ENCODE measurements at regions of chr11 and their contacts with region 1.

Region 1: DNA sequence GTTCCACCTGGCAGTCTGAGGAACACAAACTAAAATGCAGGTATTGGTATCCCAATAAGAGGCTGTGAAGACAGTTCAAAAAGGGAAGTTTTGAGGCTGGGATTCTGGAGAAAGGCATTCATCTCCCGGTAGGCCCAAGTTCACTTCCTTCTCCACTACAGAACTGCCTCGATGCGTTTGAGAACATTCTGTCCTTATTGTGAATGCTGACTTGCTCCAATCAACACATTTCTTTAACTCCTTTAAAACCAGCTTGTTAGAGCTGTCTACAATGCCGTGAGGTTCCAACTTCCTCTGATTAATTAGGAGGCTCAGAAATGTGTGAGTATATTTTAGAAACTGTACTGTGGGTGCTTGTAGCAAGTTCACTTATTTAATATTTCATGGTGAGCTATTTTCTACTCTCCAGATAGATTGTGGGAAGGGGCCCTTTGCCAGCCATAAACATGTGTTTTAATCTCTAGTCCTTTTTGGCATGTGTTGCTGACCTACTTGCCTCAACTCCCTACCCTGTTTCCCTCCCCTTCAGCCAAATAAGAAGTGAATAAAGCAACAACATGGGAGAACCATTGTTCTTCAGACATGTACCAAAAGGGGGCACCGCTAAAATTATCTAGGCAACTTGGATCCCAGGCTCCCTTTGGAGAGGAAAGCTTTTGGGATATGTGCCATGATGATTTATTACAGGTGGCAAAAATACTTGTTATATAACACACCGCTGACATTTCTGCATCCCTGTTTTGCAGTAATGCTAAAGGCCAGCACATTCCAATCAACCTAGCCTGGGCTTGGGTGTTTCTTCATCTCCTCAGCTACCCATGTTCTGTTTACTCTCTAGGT is 245.6 kb downstream of the BLID start:
- DNase-seq: no peak
- H3K4me3 ChIP-seq: no peak overlapping the region
- H3K27ac ChIP-seq: no peak overlapping the region
- H3K4me1 ChIP-seq: no peaks in the 10 kb centered on the region
- H3K27me3 ChIP-seq: peaks cover 0 to 1% (median 0%) of the 10 kb centered on the region in 4 experiments; a peak in 1 of 7 replicates
- CTCF ChIP-seq: no peak
- EP300 ChIP-seq: no peak
- POLR2A ChIP-seq: no peak
- RAD21 ChIP-seq: peak in 1 of 2 experiments; percentile 22; a peak in 1 of 4 replicates

Region 2: DNA sequence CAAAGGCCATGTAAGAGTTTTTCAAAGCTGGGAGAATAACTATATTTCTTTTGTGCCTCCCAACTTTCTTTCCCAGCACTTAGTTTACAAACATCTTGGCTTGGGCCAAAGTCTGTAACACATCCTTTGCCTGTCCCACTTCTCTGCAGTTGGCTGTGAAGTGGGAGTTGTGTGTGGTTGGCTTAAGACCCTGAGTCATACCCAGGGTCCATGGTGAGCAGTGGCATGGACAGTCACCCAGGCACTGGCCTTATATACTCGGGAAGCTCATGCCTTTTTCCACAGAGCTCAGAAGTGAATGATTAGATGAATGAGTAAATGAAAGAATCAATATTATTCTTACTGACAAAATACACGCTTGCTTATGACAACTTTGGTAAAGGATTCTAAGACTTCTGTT is 14.2 kb after region 1 on chr11:
- CTCF ChIA-PET with region 1: interaction called, 13 read pairs
- POLR2A ChIA-PET with region 1: no interaction called
- DNase-seq: no peak
- H3K4me3 ChIP-seq: no peak overlapping the region
- H3K27ac ChIP-seq: no peak overlapping the region
- H3K4me1 ChIP-seq: no peaks in the 10 kb centered on the region
- H3K27me3 ChIP-seq: no peaks in the 10 kb centered on the region
- CTCF ChIP-seq: no peak
- EP300 ChIP-seq: no peak
- POLR2A ChIP-seq: no peak
- RAD21 ChIP-seq: no peak

Region 3: GRCh38 chr11:121904148-121904547 is 33.7 kb after region 1 on chr11:
- CTCF ChIA-PET with region 1: no interaction called
- POLR2A ChIA-PET with region 1: no interaction called
- DNase-seq: no peak
- H3K4me3 ChIP-seq: no peak overlapping the region
- H3K27ac ChIP-seq: no peak overlapping the region
- H3K4me1 ChIP-seq: no peaks in the 10 kb centered on the region
- H3K27me3 ChIP-seq: no peaks in the 10 kb centered on the region
- CTCF ChIP-seq: no peak
- EP300 ChIP-seq: no peak
- POLR2A ChIP-seq: no peak
- RAD21 ChIP-seq: no peak